ENCODE measurements at regions of chr12 and their contacts with region 1.

Region 1: DNA sequence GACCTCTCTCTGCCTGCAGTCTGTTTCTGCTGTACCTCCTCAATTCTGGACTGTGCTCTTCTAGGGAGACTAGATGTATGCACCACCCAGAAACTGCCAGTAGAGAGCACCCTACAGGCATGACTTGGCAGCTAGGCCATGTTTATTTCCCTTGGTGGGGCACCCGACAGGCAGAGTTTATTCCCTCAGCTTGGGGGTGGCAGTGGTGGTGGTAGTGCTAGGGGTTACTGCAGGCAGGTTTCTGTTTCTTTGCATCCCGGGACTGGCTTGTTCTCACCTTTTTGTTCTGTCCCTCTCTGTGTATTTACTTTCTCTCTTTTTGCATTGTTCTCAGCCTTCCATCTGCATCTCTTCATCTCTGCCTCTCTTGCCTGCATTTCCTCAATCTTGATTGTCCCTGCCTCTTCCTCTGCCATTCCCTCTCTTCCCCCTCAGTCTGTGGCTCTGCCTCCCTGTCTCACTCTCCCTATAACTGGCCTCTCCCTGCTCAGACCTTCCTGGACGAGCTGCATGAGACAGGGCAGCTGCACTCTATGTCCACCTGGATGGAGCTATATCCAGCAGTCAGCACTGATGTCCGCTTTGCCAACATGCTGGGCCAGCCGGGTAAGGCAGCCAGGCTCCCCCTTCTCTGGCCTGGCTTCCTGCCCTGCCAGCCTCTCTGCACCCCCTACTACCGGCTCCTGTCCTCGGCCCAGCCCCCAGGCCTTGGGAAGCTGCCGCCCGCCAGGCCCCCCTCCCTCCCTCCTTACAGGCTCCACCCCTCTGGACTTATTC is 13.8 kb downstream of the PRPF40B start:
- DNase-seq: peak; percentile 78
- ATAC-seq: peak; percentile 97
- H3K4me3 Mint-ChIP-seq: no peak overlapping the region
- H3K27ac Mint-ChIP-seq: peak overlapping the region; percentile 33
- H3K4me1 Mint-ChIP-seq: peaks cover 14% of the 10 kb centered on the region
- H3K27me3 Mint-ChIP-seq: no peaks in the 10 kb centered on the region

Region 2: DNA sequence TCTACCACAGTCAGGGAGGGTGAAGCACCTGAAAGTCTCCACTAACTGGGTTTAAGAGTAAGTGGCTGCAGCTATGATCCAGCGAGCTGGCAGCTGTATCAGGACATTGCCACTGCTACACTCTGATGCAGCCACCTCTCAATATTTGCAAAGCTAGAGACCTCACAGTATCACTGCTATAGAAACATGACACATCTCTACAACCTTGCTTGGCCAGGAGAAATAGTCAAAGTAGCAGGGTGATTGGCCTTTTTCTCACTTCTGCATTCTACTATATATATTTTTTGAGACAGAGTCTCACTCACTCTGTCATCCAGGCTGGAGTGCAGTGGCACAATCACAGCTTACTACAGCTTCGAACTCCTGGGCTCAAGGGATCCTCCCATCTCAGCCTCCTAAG is 79.4 kb after region 1 on chr12:
- CTCF ChIA-PET with region 1: interaction called, 332 read pairs
- POLR2A ChIA-PET with region 1: no interaction called
- intact Hi-C with region 1: no loop called
- DNase-seq: no peak
- ATAC-seq: no peak
- H3K4me3 Mint-ChIP-seq: no peak overlapping the region
- H3K27ac Mint-ChIP-seq: no peak overlapping the region
- H3K4me1 Mint-ChIP-seq: no peaks in the 10 kb centered on the region
- H3K27me3 Mint-ChIP-seq: peaks cover 11% of the 10 kb centered on the region